Dendritic cell treated with granulocyte-macrophage colony-stimulating factor and Interleukin-4, amounts not matched to agents 40 ng/mL and 50 ng/mL, for 4 days (primary cell): ENCODE measurements at regions of chr6 and their contacts with region 1.

Region 1: GRCh38 chr6:32885698-32886286 is 31.8 kb downstream of the PSMB9 start:
- H3K4me3 Mint-ChIP-seq: no peak overlapping the region
- H3K27ac Mint-ChIP-seq: no peak overlapping the region
- H3K4me1 Mint-ChIP-seq: peaks cover 14% of the 10 kb centered on the region
- H3K27me3 Mint-ChIP-seq: peaks cover 13% of the 10 kb centered on the region

Region 2: DNA sequence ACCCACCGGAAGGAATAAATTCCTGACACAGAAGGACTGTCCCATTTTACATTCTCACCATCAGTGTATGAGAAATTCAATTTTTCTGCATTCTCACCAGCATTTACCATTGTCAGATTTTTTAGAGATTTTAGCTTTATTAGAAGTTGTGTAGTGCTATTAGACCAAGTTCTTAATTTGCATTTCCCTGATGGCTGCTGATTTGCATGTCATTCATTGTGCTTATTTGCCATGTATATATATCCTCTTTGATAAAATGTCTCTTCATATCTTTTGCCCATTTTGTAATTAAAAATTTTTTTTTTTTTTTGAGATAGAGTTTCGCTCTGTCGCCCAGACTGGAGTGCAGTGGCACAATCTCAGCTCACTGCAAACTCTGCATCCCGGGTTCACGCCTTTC is 346.0 kb before region 1 on chr6:
- intact Hi-C with region 1: no loop called
- H3K4me3 Mint-ChIP-seq: no peak overlapping the region
- H3K27ac Mint-ChIP-seq: no peak overlapping the region
- H3K4me1 Mint-ChIP-seq: peaks cover 14% of the 10 kb centered on the region
- H3K27me3 Mint-ChIP-seq: peaks cover 1% of the 10 kb centered on the region

Region 3: DNA sequence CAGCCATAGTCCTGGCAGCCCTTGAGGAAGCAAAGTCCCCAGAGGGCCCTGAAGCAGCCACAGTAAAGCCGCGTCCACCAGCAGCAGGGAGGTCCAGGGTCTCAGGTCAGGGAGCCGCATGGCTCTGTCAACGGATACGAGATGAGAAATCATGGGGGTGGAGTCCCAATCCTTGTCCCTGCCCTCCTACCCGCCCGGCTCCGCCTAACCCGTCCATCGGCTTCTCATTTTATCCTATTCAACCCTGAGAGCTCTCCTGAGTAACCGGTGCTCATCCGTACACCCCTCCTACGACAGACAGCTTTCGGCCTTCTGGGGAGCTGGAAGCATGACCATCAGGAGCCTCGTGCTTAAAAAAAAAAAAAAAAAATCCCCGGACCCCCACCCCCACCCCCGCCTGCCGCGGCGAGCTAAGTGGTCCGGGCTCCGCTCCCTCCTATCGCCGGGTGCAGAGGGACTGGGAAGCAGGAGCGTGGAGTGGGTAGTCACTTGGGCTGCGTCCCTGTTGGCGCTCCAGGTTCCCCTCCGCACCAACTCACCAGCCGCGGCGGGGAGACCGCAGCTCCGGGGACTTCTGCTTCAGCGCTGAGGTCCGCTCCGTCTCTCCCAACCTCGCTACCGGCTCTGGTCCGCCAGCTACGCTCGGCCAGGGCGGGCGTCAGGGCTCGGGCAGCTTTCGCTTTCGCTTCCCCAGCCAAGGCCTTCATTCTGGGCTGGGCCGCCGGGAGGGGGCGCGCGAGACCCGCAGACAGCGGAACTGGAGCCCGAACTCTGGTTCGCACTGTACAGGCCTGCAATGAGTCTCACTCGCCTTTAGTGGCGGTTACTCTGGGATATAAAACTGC is 47.5 kb before region 1 on chr6 and contains the start of gene TAP2:
- intact Hi-C with region 1: no loop called
- H3K4me3 Mint-ChIP-seq: peak within 1 kb of the TSS; percentile 83
- H3K27ac Mint-ChIP-seq: peak within 1 kb of the TSS; percentile 88
- H3K4me1 Mint-ChIP-seq: peaks cover 57% of the 10 kb centered on the region
- H3K27me3 Mint-ChIP-seq: no peaks in the 10 kb centered on the region

Region 4: GRCh38 chr6:32933636-32934085 is 47.9 kb after region 1 on chr6:
- intact Hi-C with region 1: loop called (anchors 5 kb)
- H3K4me3 Mint-ChIP-seq: no peak overlapping the region
- H3K27ac Mint-ChIP-seq: peak overlapping the region; percentile 98
- H3K4me1 Mint-ChIP-seq: peaks cover 87% of the 10 kb centered on the region
- H3K27me3 Mint-ChIP-seq: no peaks in the 10 kb centered on the region

Region 5: GRCh38 chr6:32952817-32953739 is 67.3 kb after region 1 on chr6 and contains the start of gene HLA-DMA:
- intact Hi-C with region 1: loop called (anchors 2 kb)
- H3K4me3 Mint-ChIP-seq: peak within 1 kb of the TSS; percentile 94
- H3K27ac Mint-ChIP-seq: peak within 1 kb of the TSS; percentile 98
- H3K4me1 Mint-ChIP-seq: peaks cover 70% of the 10 kb centered on the region
- H3K27me3 Mint-ChIP-seq: no peaks in the 10 kb centered on the region

Region 6: GRCh38 chr6:32984605-32985389 is 99.0 kb after region 1 on chr6:
- intact Hi-C with region 1: loop called (anchors 1 kb)
- H3K4me3 Mint-ChIP-seq: no peak overlapping the region
- H3K27ac Mint-ChIP-seq: peak overlapping the region; percentile 43
- H3K4me1 Mint-ChIP-seq: peaks cover 43% of the 10 kb centered on the region
- H3K27me3 Mint-ChIP-seq: no peaks in the 10 kb centered on the region

Region 7: DNA sequence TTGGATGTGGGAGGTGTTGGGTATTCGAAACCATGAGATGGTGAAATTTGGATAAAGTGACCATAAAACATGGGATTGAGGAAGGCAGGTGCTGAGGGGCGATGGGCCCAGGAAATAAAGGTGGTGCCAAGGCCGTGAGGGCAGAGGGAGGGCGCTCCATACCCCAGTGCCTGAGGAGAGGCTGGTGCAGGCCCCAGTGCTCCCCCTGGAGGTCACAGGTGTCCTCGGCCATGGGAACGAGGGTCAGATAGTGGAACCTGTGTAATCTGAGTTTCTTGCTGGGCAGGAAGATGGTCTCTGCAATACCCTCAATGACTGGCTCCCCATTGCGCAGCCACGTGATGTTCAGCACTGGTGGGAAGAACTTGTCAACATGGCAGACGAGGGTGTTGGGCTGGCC is 206.2 kb after region 1 on chr6:
- intact Hi-C with region 1: loop called (anchors 10 kb)
- H3K4me3 Mint-ChIP-seq: no peak overlapping the region
- H3K27ac Mint-ChIP-seq: peak overlapping the region; percentile 8
- H3K4me1 Mint-ChIP-seq: peaks cover 29% of the 10 kb centered on the region
- H3K27me3 Mint-ChIP-seq: peaks cover 6% of the 10 kb centered on the region